ENCODE measurements at regions of chr12 and their contacts with region 1.

Region 1: DNA sequence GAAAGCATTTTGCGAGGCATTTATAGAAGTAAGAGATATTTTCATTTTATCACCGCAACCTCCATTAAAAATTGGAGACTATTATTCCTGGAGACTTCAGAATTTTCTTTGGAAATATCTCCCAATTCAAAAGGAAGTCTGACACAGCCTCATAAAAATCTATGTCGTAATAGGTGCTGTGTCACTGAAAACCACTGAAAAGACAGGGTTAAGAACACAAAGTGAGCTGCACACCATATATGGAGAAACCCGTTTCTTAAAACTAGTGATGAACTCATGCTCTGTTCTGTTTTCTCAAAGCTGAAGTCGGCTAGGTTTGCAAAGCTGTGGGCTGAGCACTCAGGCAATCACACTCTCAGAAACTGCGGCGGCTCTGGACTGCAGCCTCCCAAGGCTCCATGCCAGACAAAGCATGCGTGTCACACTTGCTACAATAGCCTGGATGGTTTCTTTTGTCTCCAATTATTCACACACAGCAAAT is at the start of gene GLIPR1:
- DNase-seq: peak; percentile 86
- H3K4me3 Mint-ChIP-seq: peak within 1 kb of the TSS; percentile 89
- H3K27ac Mint-ChIP-seq: peak within 1 kb of the TSS; percentile 88
- H3K4me1 Mint-ChIP-seq: peaks cover 85% of the 10 kb centered on the region
- H3K27me3 Mint-ChIP-seq: peaks cover 1% of the 10 kb centered on the region
- total RNA-seq, gene GLIPR1: 5.8 to 6.8 TPM

Region 2: DNA sequence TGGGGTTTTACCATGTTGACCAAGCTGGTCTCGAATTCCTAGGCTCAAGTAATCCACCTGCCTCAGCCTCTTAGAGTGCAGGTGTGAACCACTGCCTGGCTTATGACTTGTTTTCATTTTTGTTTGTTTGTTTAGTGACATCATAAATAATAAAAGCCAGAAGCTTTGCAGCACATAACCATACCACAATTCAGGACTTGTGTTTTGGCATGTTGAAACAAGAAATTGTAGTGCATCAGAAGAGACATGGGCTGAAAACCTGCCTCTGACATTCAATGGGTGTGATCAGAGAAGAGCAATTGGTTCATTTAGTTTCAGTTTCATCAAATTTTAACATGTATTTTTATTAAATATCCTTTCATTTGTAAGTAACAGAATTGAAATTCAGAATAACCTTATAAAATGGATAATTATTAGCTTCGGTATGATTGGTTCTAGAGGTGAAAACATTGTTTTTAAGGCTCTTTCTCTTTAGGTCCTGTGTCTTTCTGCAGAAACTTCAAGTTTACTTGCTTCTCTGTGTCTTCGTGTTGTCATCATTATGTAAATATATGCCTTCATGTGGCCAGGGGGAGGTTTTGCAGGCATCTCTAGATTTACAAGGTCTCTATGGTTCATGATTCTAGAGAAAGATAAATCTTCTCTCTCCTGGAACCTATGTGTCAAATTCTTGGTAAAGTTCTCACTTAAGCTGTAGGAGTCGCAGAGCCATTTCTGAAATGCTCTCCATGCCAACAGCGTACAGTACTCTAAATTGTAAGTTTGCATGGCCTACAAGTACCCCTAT is 582.9 kb before region 1 on chr12:
- CTCF ChIA-PET with region 1: no interaction called
- POLR2A ChIA-PET with region 1: no interaction called
- intact Hi-C with region 1: loop called (anchors 5 kb)
- DNase-seq: no peak
- H3K4me3 Mint-ChIP-seq: no peak overlapping the region
- H3K27ac Mint-ChIP-seq: peak overlapping the region; percentile 9
- H3K4me1 Mint-ChIP-seq: peaks cover 29% of the 10 kb centered on the region
- H3K27me3 Mint-ChIP-seq: no peaks in the 10 kb centered on the region

Region 3: DNA sequence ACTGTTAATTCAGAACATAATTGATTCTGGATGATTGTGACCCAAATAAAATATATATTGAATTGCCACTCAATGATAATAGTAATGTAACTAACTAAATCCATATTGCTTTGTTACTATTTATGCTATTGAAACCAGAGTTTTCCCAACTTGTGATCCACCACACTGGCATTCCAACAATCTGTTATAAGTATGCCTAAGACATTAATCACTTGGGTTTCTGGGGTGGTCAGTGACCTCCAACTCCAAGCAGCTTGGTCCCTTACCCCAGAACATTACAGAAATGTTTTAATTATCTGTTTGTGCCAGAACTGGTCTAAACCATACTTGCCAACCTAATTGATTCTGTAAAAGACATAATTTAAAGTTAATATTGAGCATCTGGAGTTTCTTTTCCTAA is 165.0 kb before region 1 on chr12:
- CTCF ChIA-PET with region 1: no interaction called
- POLR2A ChIA-PET with region 1: no interaction called
- intact Hi-C with region 1: no loop called
- DNase-seq: no peak
- H3K4me3 Mint-ChIP-seq: no peak overlapping the region
- H3K27ac Mint-ChIP-seq: no peak overlapping the region
- H3K4me1 Mint-ChIP-seq: no peaks in the 10 kb centered on the region
- H3K27me3 Mint-ChIP-seq: peaks cover 2% of the 10 kb centered on the region

Region 4: GRCh38 chr12:75437564-75437963 is 42.9 kb before region 1 on chr12:
- CTCF ChIA-PET with region 1: interaction called, 18 read pairs
- POLR2A ChIA-PET with region 1: no interaction called
- intact Hi-C with region 1: loop called (anchors 2 kb)
- DNase-seq: no peak
- H3K4me3 Mint-ChIP-seq: no peak overlapping the region
- H3K27ac Mint-ChIP-seq: no peak overlapping the region
- H3K4me1 Mint-ChIP-seq: peaks cover 7% of the 10 kb centered on the region
- H3K27me3 Mint-ChIP-seq: peaks cover 5% of the 10 kb centered on the region

Region 5: DNA sequence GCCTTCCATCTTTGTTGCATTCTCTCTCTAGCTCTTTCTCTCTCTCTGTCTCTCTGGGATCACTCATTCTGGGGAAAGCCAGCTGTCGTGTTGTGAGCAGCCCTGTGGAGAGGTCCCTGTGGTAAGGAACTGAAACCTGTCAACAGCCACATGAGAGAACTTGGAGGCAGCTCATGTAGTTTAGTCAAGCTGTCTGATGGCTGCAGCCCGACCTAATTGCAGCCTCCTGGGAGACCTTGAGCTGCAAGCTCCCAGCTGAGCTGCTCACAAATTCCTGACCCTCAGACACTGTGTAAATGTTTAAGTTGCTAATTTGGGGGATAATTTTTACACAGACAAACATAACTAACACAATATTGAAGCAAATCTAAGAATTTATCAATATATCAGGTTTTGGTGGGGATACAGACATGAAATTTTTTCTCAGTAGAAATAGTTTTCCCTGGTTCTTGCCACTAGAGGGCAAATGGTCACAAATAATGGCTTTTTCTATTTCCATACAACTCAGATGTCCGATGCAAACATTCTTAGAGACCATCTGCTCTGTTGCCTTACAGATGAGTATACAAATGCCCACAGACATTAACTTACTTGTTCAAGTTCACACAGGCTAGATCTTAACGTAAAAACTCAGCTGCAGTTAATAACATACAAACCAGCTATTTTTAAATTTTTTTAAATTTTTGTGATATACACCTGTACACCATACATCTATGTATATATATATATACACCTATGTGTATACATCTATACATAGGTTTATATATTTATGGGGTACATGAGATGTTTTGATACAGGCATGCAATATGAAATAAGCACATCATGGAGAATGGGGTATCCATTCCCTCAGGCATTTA is 46.4 kb after region 1 on chr12:
- CTCF ChIA-PET with region 1: interaction called, 28 read pairs
- POLR2A ChIA-PET with region 1: no interaction called
- intact Hi-C with region 1: no loop called
- DNase-seq: peak; percentile 21
- H3K4me3 Mint-ChIP-seq: no peak overlapping the region
- H3K27ac Mint-ChIP-seq: no peak overlapping the region
- H3K4me1 Mint-ChIP-seq: peaks cover 6% of the 10 kb centered on the region
- H3K27me3 Mint-ChIP-seq: peaks cover 19% of the 10 kb centered on the region

Region 6: DNA sequence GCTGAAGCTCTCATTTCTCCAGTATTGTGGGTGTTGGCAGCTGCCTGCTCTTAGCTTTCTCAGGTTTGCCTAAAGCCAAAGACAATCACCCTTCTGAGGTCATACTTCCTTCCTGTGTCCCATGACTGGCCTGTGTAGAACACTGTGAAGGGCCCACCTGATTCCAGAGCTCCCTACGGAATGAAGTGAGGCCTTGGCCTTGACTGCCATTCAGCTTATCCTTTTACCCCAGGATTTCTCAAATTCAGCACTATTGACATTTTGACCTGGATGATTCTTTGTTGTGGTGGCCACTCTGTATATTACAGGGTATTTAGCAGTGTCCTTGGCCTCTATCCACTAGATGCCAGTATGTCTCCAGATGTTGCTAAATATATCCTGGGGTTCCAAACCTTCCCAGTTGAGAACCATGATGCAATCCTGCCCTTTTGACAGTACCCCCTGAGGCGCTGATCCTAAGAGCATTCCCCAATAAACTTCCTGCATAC is 143.2 kb after region 1 on chr12:
- CTCF ChIA-PET with region 1: no interaction called
- POLR2A ChIA-PET with region 1: no interaction called
- intact Hi-C with region 1: no loop called
- DNase-seq: no peak
- H3K4me3 Mint-ChIP-seq: no peak overlapping the region
- H3K27ac Mint-ChIP-seq: no peak overlapping the region
- H3K4me1 Mint-ChIP-seq: no peaks in the 10 kb centered on the region
- H3K27me3 Mint-ChIP-seq: peaks cover 2% of the 10 kb centered on the region

Region 7: GRCh38 chr12:75933101-75933500 is 452.6 kb after region 1 on chr12:
- CTCF ChIA-PET with region 1: interaction called, 3 read pairs
- POLR2A ChIA-PET with region 1: no interaction called
- intact Hi-C with region 1: loop called (anchors 1 kb)
- DNase-seq: no peak
- H3K4me3 Mint-ChIP-seq: no peak overlapping the region
- H3K27ac Mint-ChIP-seq: no peak overlapping the region
- H3K4me1 Mint-ChIP-seq: peaks cover 20% of the 10 kb centered on the region
- H3K27me3 Mint-ChIP-seq: no peaks in the 10 kb centered on the region

Region 8: GRCh38 chr12:76031537-76032073 is 551.1 kb after region 1 on chr12 and contains the start of gene PHLDA1:
- CTCF ChIA-PET with region 1: interaction called, 14 read pairs
- POLR2A ChIA-PET with region 1: interaction called, 10 read pairs
- intact Hi-C with region 1: loop called (anchors 2 kb)
- DNase-seq: peak; percentile 97
- H3K4me3 Mint-ChIP-seq: peak within 1 kb of the TSS; percentile 96
- H3K27ac Mint-ChIP-seq: peak within 1 kb of the TSS; percentile 94
- H3K4me1 Mint-ChIP-seq: peaks cover 34% of the 10 kb centered on the region
- H3K27me3 Mint-ChIP-seq: no peaks in the 10 kb centered on the region
- total RNA-seq, gene PHLDA1: 23.8 to 24.4 TPM

Region 9: GRCh38 chr12:76348079-76348901 is 867.8 kb after region 1 on chr12 and contains the start of gene BBS10:
- CTCF ChIA-PET with region 1: interaction called, 4 read pairs
- POLR2A ChIA-PET with region 1: no interaction called
- intact Hi-C with region 1: loop called (anchors 1 kb)
- DNase-seq: peak; percentile 93
- H3K4me3 Mint-ChIP-seq: peak within 1 kb of the TSS; percentile 91
- H3K27ac Mint-ChIP-seq: peak within 1 kb of the TSS; percentile 90
- H3K4me1 Mint-ChIP-seq: peaks cover 25% of the 10 kb centered on the region
- H3K27me3 Mint-ChIP-seq: no peaks in the 10 kb centered on the region
- total RNA-seq, gene BBS10: 3.2 to 3.4 TPM